Cardiac septum (tissue), 1 donor: ENCODE measurements at regions of chr22 and their contacts with region 1.

Region 1: DNA sequence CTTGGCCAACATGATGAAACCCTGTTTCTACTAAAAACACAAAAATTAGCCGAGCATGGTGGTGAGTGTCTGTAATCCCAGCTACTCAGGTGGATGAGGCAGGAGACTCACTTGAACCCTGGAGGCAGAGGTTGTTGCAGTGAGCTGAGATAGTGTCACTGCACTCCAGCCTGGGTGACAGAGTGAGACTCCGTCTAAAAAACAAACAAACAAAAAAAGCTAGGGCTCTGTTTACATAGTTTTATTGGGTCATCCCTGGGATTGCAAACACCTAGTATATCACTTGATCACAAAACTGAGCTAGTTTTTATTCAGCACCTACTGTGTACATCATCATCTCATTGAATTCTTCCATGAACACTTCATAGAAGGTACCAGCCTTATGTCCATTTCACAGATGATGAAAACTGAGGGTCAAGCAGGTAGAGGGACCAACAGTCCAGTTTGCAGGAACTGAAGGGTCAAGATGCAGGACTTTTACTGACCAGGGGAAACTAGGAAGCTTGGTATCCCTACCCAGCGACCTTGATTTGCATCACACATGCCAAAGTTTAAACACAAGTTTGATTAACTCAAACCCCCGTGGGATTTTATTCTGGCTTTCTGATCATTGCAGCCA is 9.2 kb upstream of the MRTFA start:
- DNase-seq: no peak

Region 2: DNA sequence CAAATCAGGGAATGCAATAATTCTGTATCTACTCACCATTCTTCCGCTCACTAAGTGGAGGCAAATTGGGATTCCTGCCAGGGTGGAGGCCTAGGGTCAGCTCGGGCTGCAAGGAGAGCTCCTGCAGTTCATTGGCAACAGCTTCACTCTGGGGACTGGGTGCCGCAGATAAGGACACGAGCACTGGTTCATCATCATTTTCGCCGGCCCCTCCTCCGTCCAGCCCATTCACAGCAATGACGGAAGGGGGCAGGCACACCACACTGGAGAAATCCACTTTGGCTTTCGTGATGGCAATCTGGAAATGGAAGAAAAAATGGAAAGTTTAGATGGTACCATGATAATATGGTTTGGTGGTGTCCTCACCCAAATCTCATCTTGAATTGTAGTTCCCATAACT is 93.6 kb before region 1 on chr22:
- intact Hi-C with region 1: loop called (anchors 5 kb)
- DNase-seq: peak; percentile 81

Region 3: DNA sequence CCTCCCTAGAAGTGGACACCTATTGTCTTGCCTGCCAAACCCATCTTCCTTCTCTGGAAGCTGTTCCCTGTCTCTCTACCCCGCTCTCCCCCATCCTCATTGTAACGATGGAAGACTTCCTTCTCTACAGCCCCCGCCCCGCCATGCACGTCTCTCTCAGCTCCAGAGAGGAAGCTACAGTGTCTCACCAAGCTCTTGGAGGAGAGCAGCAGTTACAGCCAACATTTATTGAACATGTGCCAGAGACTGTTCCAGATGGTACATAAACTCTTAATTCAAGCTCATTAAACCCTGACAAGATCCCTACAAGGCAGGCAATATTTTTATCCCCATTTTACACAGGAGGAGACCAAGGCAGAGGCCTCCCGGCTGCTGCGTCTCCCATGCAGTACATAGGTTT is 48.7 kb after region 1 on chr22:
- intact Hi-C with region 1: no loop called
- DNase-seq: peak; percentile 53